GM12878 (cell line): ENCODE measurements at regions of chr13 and their contacts with region 1.

Region 1: GRCh38 chr13:48505597-48506091 is 27.2 kb downstream of the RCBTB2 start:
- DNase-seq: peak; percentile 93
- ATAC-seq: peak; percentile 91
- H3K4me3 ChIP-seq: peak overlapping the region; percentile 36
- H3K27ac ChIP-seq: peak overlapping the region; percentile 85
- H3K4me1 ChIP-seq: peaks cover 61% of the 10 kb centered on the region
- H3K27me3 ChIP-seq: no peaks in the 10 kb centered on the region
- CTCF ChIP-seq: no peak
- EP300 ChIP-seq: peak; percentile 75 to 90; a peak in 2 of 4 replicates
- POLR2A ChIP-seq: no peak
- RAD21 ChIP-seq: 0 out of 2 replicates have a peak, but pooled peaks have one; percentile 11

Region 2: DNA sequence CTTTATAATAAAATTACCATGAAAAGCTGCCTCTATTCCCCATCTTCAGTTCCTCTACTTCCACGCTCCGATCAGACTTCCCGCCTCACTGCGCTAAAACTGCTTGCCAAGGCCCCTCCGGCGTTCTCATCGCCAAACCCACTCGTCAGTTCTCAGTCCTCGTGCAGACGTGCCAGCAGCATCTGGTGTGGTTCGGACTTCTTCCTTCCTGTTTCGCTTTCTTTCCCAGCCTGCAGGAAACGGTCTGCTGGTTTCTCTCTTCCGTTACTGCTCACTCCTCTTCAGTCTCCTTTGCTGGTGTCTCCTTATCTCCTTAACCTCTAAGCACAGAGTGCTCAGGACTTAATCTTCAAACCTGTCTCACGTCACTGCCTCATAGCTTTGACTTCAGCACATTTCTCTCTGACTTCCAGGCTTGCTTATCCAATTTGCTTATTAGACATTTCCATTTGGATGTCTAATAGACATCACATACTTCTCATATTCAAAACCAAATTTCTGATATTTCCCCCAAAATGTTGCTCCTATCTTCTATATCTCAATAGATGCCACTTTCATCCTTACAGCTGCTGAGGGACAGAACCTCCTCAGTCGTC is 13.1 kb before region 1 on chr13:
- CTCF ChIA-PET with region 1: interaction called, 3 read pairs
- POLR2A ChIA-PET with region 1: interaction called, 3 read pairs
- RAD21 ChIA-PET with region 1: no interaction called
- SMC1A ChIA-PET with region 1: interaction called, 17 read pairs
- in situ Hi-C with region 1: no loop called
- intact Hi-C with region 1: no loop called
- DNase-seq: peak; percentile 98
- ATAC-seq: peak; percentile 88
- H3K4me3 ChIP-seq: peak overlapping the region; percentile 66; the same call in 1 of the 2 replicates
- H3K27ac ChIP-seq: peak overlapping the region; percentile 91
- H3K4me1 ChIP-seq: peaks cover 72% of the 10 kb centered on the region
- H3K27me3 ChIP-seq: no peaks in the 10 kb centered on the region
- CTCF ChIP-seq: no peak
- EP300 ChIP-seq: peak in 1 of 2 experiments; percentile 45; a peak in 1 of 4 replicates
- POLR2A ChIP-seq: peak; percentile 77
- RAD21 ChIP-seq: no peak